ENCODE measurements at regions of chr2 and their contacts with region 1.

Region 1: GRCh38 chr2:180907731-180908130 is 72.7 kb upstream of the UBE2E3 start:
- DNase-seq: no peak
- ATAC-seq: no peak
- H3K4me3 ChIP-seq: no peak overlapping the region
- H3K27ac ChIP-seq: no peak overlapping the region
- H3K4me1 ChIP-seq: no peaks in the 10 kb centered on the region
- H3K27me3 ChIP-seq: no peaks in the 10 kb centered on the region
- CTCF ChIP-seq: no peak

Region 2: DNA sequence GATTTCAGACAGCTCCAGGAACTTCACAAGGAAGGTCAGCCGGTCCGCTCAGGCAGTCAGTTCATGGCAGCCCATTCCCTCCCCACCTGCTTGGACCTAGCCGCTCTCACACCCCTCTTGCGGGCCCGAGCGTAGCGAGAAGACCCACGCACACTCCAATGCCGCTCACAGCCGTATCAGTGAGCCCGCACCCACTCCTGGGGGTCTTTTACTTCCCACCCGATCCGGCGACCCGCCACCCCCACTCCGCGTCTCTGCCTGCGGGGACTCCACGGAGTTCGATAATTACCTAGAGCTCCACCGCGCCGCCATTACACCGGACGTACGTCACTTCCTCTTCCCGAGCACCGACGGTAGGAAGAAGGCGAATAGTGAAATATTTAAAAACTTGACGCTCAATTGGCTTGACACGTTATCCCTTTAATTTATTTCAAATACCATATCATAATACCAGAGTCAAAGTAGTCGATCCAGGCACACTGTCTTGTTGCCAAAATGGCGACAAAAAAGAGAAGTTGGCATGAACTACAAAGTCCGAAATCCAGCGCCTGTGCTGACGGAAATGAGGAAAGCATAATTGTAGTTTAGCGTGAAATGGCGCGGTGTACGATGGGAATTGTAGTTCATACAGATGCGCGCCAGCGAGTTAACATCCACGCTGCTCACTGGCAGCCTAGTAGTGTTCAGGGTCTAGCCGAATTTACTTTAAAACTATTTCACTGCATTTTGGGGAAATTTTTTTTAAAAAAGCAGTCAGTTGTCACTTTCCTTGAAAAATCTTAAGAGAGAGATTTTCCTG is 900.8 kb before region 1 on chr2 and contains the start of gene CWC22:
- CTCF ChIA-PET with region 1: no interaction called
- POLR2A ChIA-PET with region 1: interaction called, 14 read pairs
- in situ Hi-C with region 1: no loop called
- intact Hi-C with region 1: no loop called
- DNase-seq: peak; percentile 91
- ATAC-seq: peak; percentile 99
- H3K4me3 ChIP-seq: peak within 1 kb of the TSS; percentile 81 to 100
- H3K27ac ChIP-seq: peak within 1 kb of the TSS; percentile 97
- H3K4me1 ChIP-seq: peaks cover 6% of the 10 kb centered on the region; the same call in 1 of the 2 replicates
- H3K27me3 ChIP-seq: no peaks in the 10 kb centered on the region
- CTCF ChIP-seq: no peak
- total RNA-seq, gene CWC22: 17.2 TPM